K562 (cell line): ENCODE measurements at regions of chr10 and their contacts with region 1.

Region 1: DNA sequence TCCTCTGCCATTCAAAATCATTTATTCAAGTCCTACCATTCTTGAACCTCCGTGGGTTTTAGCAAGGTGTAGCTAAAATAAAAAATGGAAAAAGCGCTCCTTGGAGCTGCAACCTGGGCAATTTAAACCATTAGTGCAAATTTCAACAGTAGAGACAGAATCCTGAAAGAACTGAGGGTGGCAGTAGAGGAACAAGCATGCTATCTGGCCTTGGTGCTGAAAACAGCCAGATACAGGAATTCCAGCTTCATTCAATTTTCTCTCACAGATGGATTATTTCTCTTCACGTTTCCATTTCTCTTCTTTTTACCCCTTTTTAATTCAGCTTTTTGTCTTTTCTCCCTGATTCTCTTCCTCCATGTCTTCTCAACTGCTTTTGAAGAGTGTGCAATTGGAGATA is 77.7 kb downstream of the OTUD1 start:
- DNase-seq: peak in 1 of 4 experiments; percentile 5
- ATAC-seq: peak; percentile 69
- H3K4me3 ChIP-seq: no peak overlapping the region
- H3K27ac ChIP-seq: no peak overlapping the region
- H3K4me1 ChIP-seq: peaks cover 0 to 5% of the 10 kb centered on the region in 2 experiments; a peak in 2 of 5 replicates
- H3K27me3 ChIP-seq: no peaks in the 10 kb centered on the region
- CTCF ChIP-seq: peak; percentile 37 to 60 (median 48); a peak in 4 of 6 replicates
- EP300 ChIP-seq: no peak
- POLR2A ChIP-seq: no peak
- RAD21 ChIP-seq: peak; percentile 61 to 63

Region 2: DNA sequence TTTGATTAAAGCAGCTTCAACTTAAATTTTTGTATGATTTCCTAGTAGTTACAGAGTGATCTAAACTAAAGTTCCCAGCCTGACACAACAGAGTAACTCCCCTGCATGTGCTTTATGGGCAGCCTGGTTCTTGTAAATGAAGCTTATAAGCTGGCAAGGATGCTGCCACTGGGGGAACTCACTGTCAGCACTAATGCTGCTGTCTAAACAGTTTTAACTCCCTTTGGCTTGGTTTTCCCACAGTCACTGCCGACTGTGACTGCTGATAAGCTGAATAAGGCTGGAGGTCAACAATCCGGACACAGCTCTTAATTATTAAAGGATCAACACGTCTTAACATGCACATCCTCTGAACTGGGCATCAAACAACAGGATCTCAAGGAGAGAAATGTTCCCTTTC is 52.5 kb after region 1 on chr10:
- CTCF ChIA-PET with region 1: no interaction called
- POLR2A ChIA-PET with region 1: no interaction called
- in situ Hi-C with region 1: no loop called
- intact Hi-C with region 1: no loop called
- DNase-seq: no peak
- ATAC-seq: no peak
- H3K4me3 ChIP-seq: no peak overlapping the region
- H3K27ac ChIP-seq: no peak overlapping the region
- H3K4me1 ChIP-seq: no peaks in the 10 kb centered on the region
- H3K27me3 ChIP-seq: no peaks in the 10 kb centered on the region
- CTCF ChIP-seq: no peak
- EP300 ChIP-seq: no peak
- POLR2A ChIP-seq: no peak
- RAD21 ChIP-seq: no peak

Region 3: DNA sequence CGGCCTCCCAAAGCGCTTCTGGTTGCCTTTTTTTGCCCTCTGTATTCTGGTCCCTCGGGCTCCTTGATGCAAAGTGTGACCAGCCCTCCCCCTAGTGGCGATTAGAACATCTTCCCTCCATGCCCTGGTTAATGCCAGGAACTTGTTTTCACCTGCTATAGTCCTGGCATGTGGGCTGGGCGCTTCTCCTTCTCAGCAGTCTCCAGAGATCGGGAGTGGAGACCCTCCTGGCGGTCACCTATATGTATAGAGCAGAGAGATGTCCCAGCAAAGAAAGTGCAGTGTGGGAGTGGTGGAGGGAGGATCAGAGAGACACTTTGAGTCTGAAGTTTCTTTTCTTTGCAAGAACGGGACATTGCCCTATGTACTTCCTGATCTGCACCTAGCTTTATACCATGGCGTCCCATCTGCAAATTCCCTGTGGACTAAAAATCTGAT is 186.5 kb after region 1 on chr10:
- CTCF ChIA-PET with region 1: interaction called, 3 read pairs
- POLR2A ChIA-PET with region 1: no interaction called
- in situ Hi-C with region 1: no loop called
- intact Hi-C with region 1: loop called (anchors 10 kb)
- DNase-seq: peak; percentile 14 to 53 (median 20)
- ATAC-seq: peak; percentile 81
- H3K4me3 ChIP-seq: no peak overlapping the region
- H3K27ac ChIP-seq: no peak overlapping the region
- H3K4me1 ChIP-seq: no peaks in the 10 kb centered on the region
- H3K27me3 ChIP-seq: no peaks in the 10 kb centered on the region
- CTCF ChIP-seq: peak; percentile 52 to 57 (median 55)
- EP300 ChIP-seq: no peak
- POLR2A ChIP-seq: no peak
- RAD21 ChIP-seq: peak; percentile 40 to 51

Region 4: GRCh38 chr10:24197263-24197662 is 680.7 kb after region 1 on chr10:
- CTCF ChIA-PET with region 1: no interaction called
- POLR2A ChIA-PET with region 1: no interaction called
- in situ Hi-C with region 1: no loop called
- intact Hi-C with region 1: loop called (anchors 5 kb)
- DNase-seq: no peak
- ATAC-seq: no peak
- H3K4me3 ChIP-seq: no peak overlapping the region
- H3K27ac ChIP-seq: no peak overlapping the region
- H3K4me1 ChIP-seq: no peaks in the 10 kb centered on the region
- H3K27me3 ChIP-seq: no peaks in the 10 kb centered on the region
- CTCF ChIP-seq: no peak
- EP300 ChIP-seq: no peak
- POLR2A ChIP-seq: no peak
- RAD21 ChIP-seq: no peak

Region 5: DNA sequence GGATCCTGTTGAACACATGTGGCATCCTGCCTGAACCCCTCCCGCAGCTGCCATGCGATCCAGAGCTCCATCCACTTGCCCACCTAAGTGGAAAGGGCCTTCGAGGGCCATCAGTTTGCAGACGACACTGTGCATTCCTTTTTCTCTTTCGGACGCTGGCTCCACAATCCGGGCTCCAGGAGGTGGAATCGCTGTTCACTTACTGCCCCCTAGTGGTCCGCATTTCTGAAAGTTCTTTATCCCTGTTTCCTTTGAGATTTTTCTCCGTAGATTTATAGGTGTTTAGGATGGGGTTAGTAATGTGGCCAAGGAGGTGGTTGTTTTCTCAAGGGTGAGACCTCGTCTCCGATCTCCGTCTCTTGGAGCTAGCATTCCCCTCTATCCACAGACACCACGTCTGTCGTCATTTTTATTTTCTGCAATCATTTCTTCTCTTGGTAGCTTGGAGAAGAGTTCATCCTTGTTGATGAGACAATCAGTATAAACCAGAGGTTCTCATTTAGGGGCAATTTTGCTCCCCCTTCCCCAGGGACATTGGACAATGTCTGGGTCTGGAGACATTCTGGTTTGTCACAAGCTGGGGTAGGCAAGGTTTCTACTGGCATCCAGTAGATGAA is 1002.6 kb after region 1 on chr10:
- CTCF ChIA-PET with region 1: no interaction called
- POLR2A ChIA-PET with region 1: no interaction called
- in situ Hi-C with region 1: no loop called
- intact Hi-C with region 1: loop called (anchors 5 kb)
- DNase-seq: peak; percentile 56 to 77 (median 62)
- ATAC-seq: peak; percentile 89
- H3K4me3 ChIP-seq: no peak overlapping the region
- H3K27ac ChIP-seq: no peak overlapping the region
- H3K4me1 ChIP-seq: peaks cover 0 to 3% of the 10 kb centered on the region in 2 experiments; a peak in 1 of 5 replicates
- H3K27me3 ChIP-seq: peaks cover 25 to 28% of the 10 kb centered on the region in 2 experiments; a peak in 4 of 5 replicates
- CTCF ChIP-seq: peak; percentile 63 to 83 (median 79)
- EP300 ChIP-seq: no peak
- POLR2A ChIP-seq: no peak
- RAD21 ChIP-seq: peak; percentile 51 to 76